ENCODE measurements at regions of chr16 and their contacts with region 1.

Region 1: GRCh38 chr16:30378236-30379204 is 3.8 kb downstream of the SEPTIN1 start:
- DNase-seq: peak; percentile 99
- H3K4me3 ChIP-seq: peak overlapping the region; percentile 74
- H3K27ac ChIP-seq: peak overlapping the region; percentile 97
- H3K4me1 ChIP-seq: peaks cover 52% of the 10 kb centered on the region
- CTCF ChIP-seq: no peak

Region 2: GRCh38 chr16:30395155-30395991 is 16.9 kb after region 1 on chr16 and contains the start of gene ZNF48:
- CTCF ChIA-PET with region 1: interaction called, 4 read pairs
- POLR2A ChIA-PET with region 1: interaction called, 22 read pairs
- intact Hi-C with region 1: loop called (anchors 1 kb)
- DNase-seq: peak; percentile 95
- H3K4me3 ChIP-seq: peak within 1 kb of the TSS; percentile 89
- H3K27ac ChIP-seq: peak within 1 kb of the TSS; percentile 44
- H3K4me1 ChIP-seq: peaks cover 23% of the 10 kb centered on the region
- CTCF ChIP-seq: peak; percentile 36
- total RNA-seq, gene ZNF48: 15.7 and 18.8 TPM in 2 replicates

Region 3: GRCh38 chr16:30407102-30407803 is 28.7 kb after region 1 on chr16 and contains the start of gene ZNF771:
- CTCF ChIA-PET with region 1: interaction called, 5 read pairs
- POLR2A ChIA-PET with region 1: interaction called, 19 read pairs
- intact Hi-C with region 1: loop called (anchors 2 kb)
- DNase-seq: peak; percentile 93
- H3K4me3 ChIP-seq: peak within 1 kb of the TSS; percentile 84
- H3K27ac ChIP-seq: peak within 1 kb of the TSS; percentile 82
- H3K4me1 ChIP-seq: peaks cover 28% of the 10 kb centered on the region
- CTCF ChIP-seq: peak; percentile 49
- total RNA-seq, gene ZNF771: 6.4 and 11.3 TPM in 2 replicates